Psoas muscle (tissue), 8 donors: ENCODE measurements at regions of chr18 and their contacts with region 1.

Region 1: DNA sequence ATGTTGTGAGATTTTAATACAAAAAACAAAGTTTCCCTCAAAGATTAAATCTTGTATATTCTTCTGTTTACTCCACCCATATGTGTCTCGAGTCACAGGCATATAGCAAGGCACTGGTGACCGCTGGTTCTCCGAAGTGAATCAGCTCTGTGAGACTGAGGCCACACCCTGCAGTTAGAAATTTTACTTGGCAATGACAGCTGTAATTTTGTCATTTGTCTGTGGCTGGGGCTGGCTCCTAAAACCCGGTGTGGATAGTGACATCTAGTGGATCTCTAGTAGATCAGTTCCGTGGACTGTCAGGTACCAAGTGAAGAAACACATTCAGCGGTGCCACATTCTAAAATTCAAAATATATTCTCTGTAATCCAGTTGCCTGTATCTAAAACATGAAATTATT is 278.0 kb downstream of the NEDD4L start:
- DNase-seq: peak; percentile 59 to 79
- ATAC-seq: peak; percentile 96 to 98 (median 97)
- H3K4me3 ChIP-seq: peak overlapping the region; percentile 41
- H3K27ac ChIP-seq: peak overlapping the region; percentile 79
- H3K4me1 ChIP-seq: peaks cover 12% of the 10 kb centered on the region
- H3K27me3 ChIP-seq: no peaks in the 10 kb centered on the region
- CTCF ChIP-seq: peak; percentile 74

Region 2: GRCh38 chr18:58043491-58044379 is 278.3 kb before region 1 on chr18 and contains the start of gene NEDD4L:
- intact Hi-C with region 1: loop called in 1 of 2 experiments (anchors 5 kb)
- DNase-seq: peak; percentile 76 to 88
- ATAC-seq: peak; percentile 87 to 94 (median 90)
- H3K4me3 ChIP-seq: peak within 1 kb of the TSS; percentile 92
- H3K27ac ChIP-seq: peak within 1 kb of the TSS; percentile 73
- H3K4me1 ChIP-seq: no peaks in the 10 kb centered on the region
- H3K27me3 ChIP-seq: no peaks in the 10 kb centered on the region
- CTCF ChIP-seq: peak; percentile 85
- total RNA-seq, gene NEDD4L: 19.6 to 28.0 (median 21.5) TPM

Region 3: GRCh38 chr18:58135701-58136331 is 186.2 kb before region 1 on chr18:
- intact Hi-C with region 1: loop called in 1 of 2 experiments (anchors 5 kb)
- DNase-seq: no peak
- ATAC-seq: peak; percentile 22 to 80 (median 60)
- H3K4me3 ChIP-seq: no peak overlapping the region
- H3K27ac ChIP-seq: no peak overlapping the region
- H3K4me1 ChIP-seq: no peaks in the 10 kb centered on the region
- H3K27me3 ChIP-seq: no peaks in the 10 kb centered on the region
- CTCF ChIP-seq: peak; percentile 71

Region 4: DNA sequence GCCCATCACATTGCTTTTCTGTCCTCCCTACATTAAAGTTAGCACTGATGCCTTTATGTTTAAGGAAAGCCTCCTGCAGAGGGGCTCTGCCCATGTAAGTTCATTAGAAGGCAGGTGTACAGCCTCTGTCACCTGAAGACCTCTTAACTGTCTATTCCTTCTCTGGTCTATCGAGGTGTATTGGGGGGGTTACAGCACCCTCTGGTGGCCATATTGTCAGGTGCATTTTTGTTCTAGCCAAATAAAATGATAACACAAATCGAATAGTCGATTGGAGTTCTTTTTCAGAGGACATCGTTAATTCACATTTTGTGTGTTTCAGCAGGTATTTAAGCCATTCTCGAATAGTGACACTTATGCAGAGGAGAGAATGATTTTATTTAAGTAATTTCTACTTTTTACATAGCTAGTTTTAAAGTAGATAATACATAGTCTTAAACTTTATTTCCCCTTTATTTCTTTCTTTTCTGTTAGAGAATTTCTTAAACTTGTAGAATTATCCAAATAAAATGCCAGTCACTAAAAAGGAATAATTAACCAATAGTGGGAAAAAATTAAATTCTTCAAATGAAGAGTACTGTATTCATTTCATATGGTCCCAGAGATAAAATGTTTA is 141.1 kb before region 1 on chr18:
- intact Hi-C with region 1: loop called in 1 of 2 experiments (anchors 2 kb)
- DNase-seq: no peak
- ATAC-seq: peak; percentile 57 to 72 (median 66)
- H3K4me3 ChIP-seq: no peak overlapping the region
- H3K27ac ChIP-seq: no peak overlapping the region
- H3K4me1 ChIP-seq: peaks cover 6% of the 10 kb centered on the region
- H3K27me3 ChIP-seq: no peaks in the 10 kb centered on the region
- CTCF ChIP-seq: peak; percentile 89

Region 5: DNA sequence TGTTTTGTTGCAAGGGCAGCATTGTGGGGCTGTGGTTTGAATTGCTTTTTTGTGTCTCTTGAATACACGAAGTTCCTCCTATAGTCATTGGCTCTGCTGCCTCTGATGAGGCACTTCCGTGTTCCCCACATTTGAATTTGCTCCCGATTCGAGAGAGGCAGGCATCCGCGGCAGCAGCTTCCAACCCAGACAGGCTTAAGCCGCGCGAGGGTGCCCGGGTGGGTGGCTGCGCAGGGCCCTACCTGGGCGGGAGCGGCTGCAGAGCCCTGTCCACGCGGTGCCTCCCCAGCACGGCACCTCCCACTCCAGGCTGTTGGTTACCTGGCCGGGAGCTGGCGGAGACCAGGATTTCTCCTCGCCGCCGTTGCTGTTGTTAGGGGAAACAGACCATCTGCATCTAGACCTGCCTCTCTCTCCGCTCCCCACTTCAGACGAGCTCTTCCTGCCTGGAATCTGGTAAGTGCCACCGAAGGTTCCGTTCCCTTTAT is 126.7 kb before region 1 on chr18:
- intact Hi-C with region 1: loop called in 1 of 2 experiments (anchors 5 kb)
- DNase-seq: no peak
- ATAC-seq: peak in 1 of 4 donors; percentile 21
- H3K4me3 ChIP-seq: peak overlapping the region; percentile 41
- H3K27ac ChIP-seq: no peak overlapping the region
- H3K4me1 ChIP-seq: no peaks in the 10 kb centered on the region
- H3K27me3 ChIP-seq: no peaks in the 10 kb centered on the region
- CTCF ChIP-seq: no peak

Region 6: GRCh38 chr18:58257461-58257860 is 64.5 kb before region 1 on chr18:
- intact Hi-C with region 1: loop called (anchors 2 to 5 kb)
- DNase-seq: no peak
- ATAC-seq: peak; percentile 23 to 59 (median 38)
- H3K4me3 ChIP-seq: peak overlapping the region; percentile 72
- H3K27ac ChIP-seq: peak overlapping the region; percentile 93
- H3K4me1 ChIP-seq: peaks cover 29% of the 10 kb centered on the region
- H3K27me3 ChIP-seq: no peaks in the 10 kb centered on the region
- CTCF ChIP-seq: no peak

Region 7: DNA sequence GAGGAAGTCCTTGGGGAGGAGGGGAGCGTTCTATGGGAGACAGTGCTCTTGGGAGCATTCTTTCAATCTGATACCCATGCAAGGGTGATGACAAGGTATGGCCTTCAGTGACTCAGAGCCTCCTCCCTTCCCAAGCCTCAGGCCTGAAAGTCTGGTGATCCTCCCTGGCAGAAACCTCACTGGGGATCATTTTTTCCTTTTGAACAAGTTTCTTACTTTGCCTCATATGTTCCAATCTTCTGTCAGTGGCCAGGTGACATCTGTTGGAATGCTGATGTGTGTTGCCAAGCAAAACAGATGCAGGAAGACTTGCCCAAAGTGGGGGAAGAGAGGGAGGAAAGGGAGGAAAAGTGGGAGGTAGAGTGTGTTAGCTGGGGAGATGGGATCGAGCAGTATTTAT is 53.1 kb before region 1 on chr18:
- intact Hi-C with region 1: no loop called
- DNase-seq: no peak
- ATAC-seq: peak; percentile 81 to 88 (median 82)
- H3K4me3 ChIP-seq: no peak overlapping the region
- H3K27ac ChIP-seq: peak overlapping the region; percentile 32
- H3K4me1 ChIP-seq: peaks cover 50% of the 10 kb centered on the region
- H3K27me3 ChIP-seq: no peaks in the 10 kb centered on the region
- CTCF ChIP-seq: no peak

Region 8: GRCh38 chr18:58290116-58290695 is 31.8 kb before region 1 on chr18:
- intact Hi-C with region 1: loop called in 1 of 2 experiments (anchors 1 kb)
- DNase-seq: no peak
- ATAC-seq: no peak
- H3K4me3 ChIP-seq: no peak overlapping the region
- H3K27ac ChIP-seq: no peak overlapping the region
- H3K4me1 ChIP-seq: peaks cover 56% of the 10 kb centered on the region
- H3K27me3 ChIP-seq: no peaks in the 10 kb centered on the region
- CTCF ChIP-seq: no peak

Region 9: GRCh38 chr18:58529714-58530354 is 207.8 kb after region 1 on chr18:
- intact Hi-C with region 1: no loop called
- DNase-seq: peak; percentile 40 to 71
- ATAC-seq: peak; percentile 61 to 84 (median 70)
- H3K4me3 ChIP-seq: no peak overlapping the region
- H3K27ac ChIP-seq: no peak overlapping the region
- H3K4me1 ChIP-seq: peaks cover 4% of the 10 kb centered on the region
- H3K27me3 ChIP-seq: no peaks in the 10 kb centered on the region
- CTCF ChIP-seq: peak; percentile 82